ENCODE measurements at regions of chr2 and their contacts with region 1.

Region 1: GRCh38 chr2:68196120-68196716 is 38.5 kb downstream of the PNO1 start:
- DNase-seq: no peak
- H3K4me3 ChIP-seq: no peak overlapping the region
- H3K27ac ChIP-seq: no peak overlapping the region
- H3K27me3 ChIP-seq: no peaks in the 10 kb centered on the region
- CTCF ChIP-seq: peak; percentile 68

Region 2: GRCh38 chr2:67719351-67719750 is 476.9 kb before region 1 on chr2:
- CTCF ChIA-PET with region 1: no interaction called
- POLR2A ChIA-PET with region 1: no interaction called
- DNase-seq: no peak
- H3K4me3 ChIP-seq: no peak overlapping the region
- H3K27ac ChIP-seq: no peak overlapping the region
- H3K27me3 ChIP-seq: no peaks in the 10 kb centered on the region
- CTCF ChIP-seq: no peak

Region 3: GRCh38 chr2:68185541-68186164 is 10.6 kb before region 1 on chr2:
- CTCF ChIA-PET with region 1: interaction called, 25 read pairs
- POLR2A ChIA-PET with region 1: no interaction called
- DNase-seq: no peak
- H3K4me3 ChIP-seq: no peak overlapping the region
- H3K27ac ChIP-seq: no peak overlapping the region
- H3K27me3 ChIP-seq: no peaks in the 10 kb centered on the region
- CTCF ChIP-seq: peak; percentile 68

Region 4: GRCh38 chr2:68206793-68207192 is 10.6 kb after region 1 on chr2:
- CTCF ChIA-PET with region 1: interaction called, 15 read pairs
- POLR2A ChIA-PET with region 1: no interaction called
- DNase-seq: no peak
- H3K4me3 ChIP-seq: no peak overlapping the region
- H3K27ac ChIP-seq: no peak overlapping the region
- H3K27me3 ChIP-seq: no peaks in the 10 kb centered on the region
- CTCF ChIP-seq: no peak

Region 5: GRCh38 chr2:68214381-68214780 is 18.2 kb after region 1 on chr2:
- CTCF ChIA-PET with region 1: interaction called, 12 read pairs
- POLR2A ChIA-PET with region 1: no interaction called
- DNase-seq: no peak
- H3K4me3 ChIP-seq: no peak overlapping the region
- H3K27ac ChIP-seq: no peak overlapping the region
- H3K27me3 ChIP-seq: no peaks in the 10 kb centered on the region
- CTCF ChIP-seq: no peak

Region 6: DNA sequence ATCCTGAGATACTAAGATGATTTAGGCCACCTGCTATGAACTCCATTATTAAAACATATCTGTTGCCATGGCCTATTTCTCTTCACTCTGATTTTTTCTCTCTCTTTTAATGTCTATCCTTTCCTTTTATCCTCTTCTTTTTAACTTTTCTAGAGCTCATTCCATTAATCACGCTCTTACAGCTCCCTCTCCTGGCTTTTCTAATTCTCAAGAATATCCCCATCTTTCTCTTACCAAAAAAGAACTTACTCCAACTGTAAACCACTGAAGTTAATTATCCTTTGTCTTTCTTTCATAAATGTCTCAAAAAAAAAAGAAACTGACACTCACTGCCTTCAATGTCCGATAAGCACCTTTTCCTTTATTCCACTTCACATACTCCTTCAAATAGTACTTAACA is 48.2 kb after region 1 on chr2:
- CTCF ChIA-PET with region 1: interaction called, 12 read pairs
- POLR2A ChIA-PET with region 1: no interaction called
- DNase-seq: no peak
- H3K4me3 ChIP-seq: no peak overlapping the region
- H3K27ac ChIP-seq: no peak overlapping the region
- H3K27me3 ChIP-seq: no peaks in the 10 kb centered on the region
- CTCF ChIP-seq: peak; percentile 31; the same call in 1 of the 2 replicates

Region 7: DNA sequence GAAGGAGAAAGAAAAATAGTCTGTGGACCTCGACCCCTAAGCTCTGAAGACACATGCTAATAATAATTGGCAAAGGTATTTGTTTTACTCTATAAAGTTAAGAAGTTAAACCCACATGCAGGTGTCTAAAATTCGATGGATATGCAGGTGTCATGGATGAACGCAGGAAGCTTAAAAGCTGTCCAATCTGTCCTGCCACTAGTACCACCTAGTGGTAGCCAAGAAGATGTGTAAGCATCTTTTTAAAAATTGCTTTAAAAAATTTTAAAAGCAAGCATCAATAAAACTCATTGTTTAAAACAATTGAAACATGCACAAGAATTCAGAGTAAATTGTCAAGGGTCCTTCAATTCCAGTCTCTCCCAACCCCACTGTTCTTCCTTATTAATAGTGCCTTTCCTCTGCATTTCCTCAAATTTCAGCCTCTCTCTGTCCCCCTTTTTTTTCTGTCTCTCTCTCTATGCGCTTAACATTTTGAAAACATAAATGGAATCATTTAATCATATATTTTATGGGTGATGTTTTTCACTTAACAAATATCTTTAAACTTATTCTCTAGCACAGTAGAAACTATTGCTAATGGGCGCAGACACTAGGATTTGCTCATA is 86.7 kb after region 1 on chr2:
- CTCF ChIA-PET with region 1: interaction called, 17 read pairs
- POLR2A ChIA-PET with region 1: no interaction called
- DNase-seq: no peak
- H3K4me3 ChIP-seq: no peak overlapping the region
- H3K27ac ChIP-seq: no peak overlapping the region
- H3K27me3 ChIP-seq: no peaks in the 10 kb centered on the region
- CTCF ChIP-seq: peak; percentile 88

Measured in AG04450 (cell line).